ENCODE measurements at regions of chr7 and their contacts with region 1.

Region 1: DNA sequence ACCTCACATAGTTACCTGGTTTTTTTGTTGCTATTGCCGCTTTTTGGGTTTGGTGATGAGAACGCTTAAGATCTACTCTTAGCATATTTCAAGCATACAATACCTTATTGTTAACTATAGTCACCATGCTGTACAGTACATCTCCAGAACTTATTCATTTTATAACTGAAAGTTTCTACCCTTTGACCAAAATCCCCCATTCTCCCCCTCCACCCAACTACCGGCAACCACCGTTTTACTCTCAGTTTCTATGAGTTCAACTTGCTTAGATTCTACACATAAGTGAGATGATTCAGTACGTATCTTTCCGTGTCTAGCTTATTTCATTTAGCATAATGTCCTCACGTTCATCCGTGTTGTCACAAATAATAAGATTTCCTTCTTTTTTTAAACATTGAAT is 86.7 kb upstream of the IL6 start:
- DNase-seq: no peak
- ATAC-seq: peak; percentile 91
- H3K4me3 Mint-ChIP-seq: peak overlapping the region; percentile 55
- H3K27ac Mint-ChIP-seq: peak overlapping the region; percentile 75
- H3K4me1 Mint-ChIP-seq: peaks cover 30% of the 10 kb centered on the region
- H3K27me3 Mint-ChIP-seq: no peaks in the 10 kb centered on the region
- CTCF ChIP-seq: no peak

Region 2: GRCh38 chr7:22559829-22560489 is 80.3 kb before region 1 on chr7:
- CTCF ChIA-PET with region 1: interaction called, 4 read pairs
- POLR2A ChIA-PET with region 1: interaction called, 17 read pairs
- intact Hi-C with region 1: loop called (anchors 1 kb)
- DNase-seq: peak; percentile 43
- ATAC-seq: peak; percentile 80
- H3K4me3 Mint-ChIP-seq: peak overlapping the region; percentile 36
- H3K27ac Mint-ChIP-seq: peak overlapping the region; percentile 70
- H3K4me1 Mint-ChIP-seq: peaks cover 50% of the 10 kb centered on the region
- H3K27me3 Mint-ChIP-seq: no peaks in the 10 kb centered on the region
- CTCF ChIP-seq: peak; percentile 24

Region 3: DNA sequence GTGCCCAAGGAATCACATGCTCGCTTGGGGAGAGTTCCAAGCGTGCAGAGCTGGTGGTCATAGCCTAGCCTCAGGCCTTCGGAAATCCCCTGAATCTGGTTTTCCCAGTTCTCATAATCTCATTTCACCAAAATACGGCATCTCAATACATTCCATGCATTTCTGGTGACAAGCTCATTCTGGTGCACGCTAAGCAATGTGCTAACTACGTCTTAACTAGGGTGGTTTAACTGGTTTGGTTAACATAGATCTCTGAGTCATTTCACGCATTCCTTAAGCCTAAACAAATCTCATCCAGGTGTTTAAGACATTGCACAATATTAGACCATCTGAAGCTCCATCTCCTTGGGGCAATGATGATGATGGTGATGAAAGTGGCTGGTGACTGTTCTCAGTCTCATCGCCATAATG is 67.3 kb before region 1 on chr7:
- CTCF ChIA-PET with region 1: no interaction called
- POLR2A ChIA-PET with region 1: no interaction called
- intact Hi-C with region 1: no loop called
- DNase-seq: no peak
- ATAC-seq: no peak
- H3K4me3 Mint-ChIP-seq: no peak overlapping the region
- H3K27ac Mint-ChIP-seq: no peak overlapping the region
- H3K4me1 Mint-ChIP-seq: peaks cover 55% of the 10 kb centered on the region
- H3K27me3 Mint-ChIP-seq: no peaks in the 10 kb centered on the region
- CTCF ChIP-seq: no peak

Region 4: DNA sequence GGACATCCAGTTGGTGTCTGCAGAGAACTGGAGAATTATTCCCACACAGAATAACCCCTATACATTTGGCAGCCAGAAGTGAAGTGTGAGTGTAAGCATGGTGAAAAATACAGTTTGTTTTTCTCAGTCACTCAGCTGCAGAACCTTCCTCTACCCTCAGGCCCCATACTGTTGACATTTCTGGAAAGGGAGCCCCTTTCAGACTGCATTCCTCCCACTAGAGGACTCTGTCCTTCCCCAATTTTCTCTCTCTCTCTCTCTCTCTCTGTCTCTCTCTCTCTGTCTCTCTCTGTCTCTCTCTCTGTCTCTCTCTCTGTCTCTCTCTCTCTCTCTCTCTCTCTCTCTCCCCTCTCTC is 53.5 kb before region 1 on chr7:
- CTCF ChIA-PET with region 1: no interaction called
- POLR2A ChIA-PET with region 1: interaction called, 3 read pairs
- intact Hi-C with region 1: loop called (anchors 1 kb)
- DNase-seq: no peak
- ATAC-seq: no peak
- H3K4me3 Mint-ChIP-seq: peak overlapping the region; percentile 67
- H3K27ac Mint-ChIP-seq: peak overlapping the region; percentile 87
- H3K4me1 Mint-ChIP-seq: peaks cover 65% of the 10 kb centered on the region
- H3K27me3 Mint-ChIP-seq: no peaks in the 10 kb centered on the region
- CTCF ChIP-seq: no peak

Region 5: GRCh38 chr7:22601812-22602565 is 38.3 kb before region 1 on chr7:
- CTCF ChIA-PET with region 1: no interaction called
- POLR2A ChIA-PET with region 1: no interaction called
- intact Hi-C with region 1: no loop called
- DNase-seq: no peak
- ATAC-seq: no peak
- H3K4me3 Mint-ChIP-seq: no peak overlapping the region
- H3K27ac Mint-ChIP-seq: no peak overlapping the region
- H3K4me1 Mint-ChIP-seq: peaks cover 21% of the 10 kb centered on the region
- H3K27me3 Mint-ChIP-seq: no peaks in the 10 kb centered on the region
- CTCF ChIP-seq: no peak

Region 6: DNA sequence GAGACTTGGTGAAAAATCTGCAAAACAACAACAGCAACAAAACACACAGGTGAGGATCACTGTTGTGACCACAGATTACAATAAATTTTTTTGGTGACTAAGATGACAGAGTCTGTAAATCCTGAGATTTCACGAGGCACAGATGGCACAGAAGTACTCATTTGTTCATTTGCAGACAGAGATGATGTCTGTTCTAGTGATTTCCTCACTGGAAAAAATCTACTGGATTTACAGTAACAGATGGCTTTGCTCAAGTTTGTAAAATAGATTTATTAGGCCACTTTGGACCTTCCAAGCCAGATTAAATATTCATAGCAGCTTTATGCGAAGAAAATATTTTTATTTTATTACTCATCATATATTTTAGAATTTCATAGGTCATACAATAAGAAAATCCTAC is 26.8 kb before region 1 on chr7:
- CTCF ChIA-PET with region 1: no interaction called
- POLR2A ChIA-PET with region 1: interaction called, 10 read pairs
- intact Hi-C with region 1: no loop called
- DNase-seq: no peak
- ATAC-seq: no peak
- H3K4me3 Mint-ChIP-seq: no peak overlapping the region
- H3K27ac Mint-ChIP-seq: no peak overlapping the region
- H3K4me1 Mint-ChIP-seq: peaks cover 43% of the 10 kb centered on the region
- H3K27me3 Mint-ChIP-seq: no peaks in the 10 kb centered on the region
- CTCF ChIP-seq: no peak

Region 7: GRCh38 chr7:22627136-22627535 is 13.1 kb before region 1 on chr7:
- CTCF ChIA-PET with region 1: no interaction called
- POLR2A ChIA-PET with region 1: interaction called, 4 read pairs
- intact Hi-C with region 1: loop called (anchors 2 kb)
- DNase-seq: no peak
- ATAC-seq: no peak
- H3K4me3 Mint-ChIP-seq: no peak overlapping the region
- H3K27ac Mint-ChIP-seq: no peak overlapping the region
- H3K4me1 Mint-ChIP-seq: peaks cover 9% of the 10 kb centered on the region
- H3K27me3 Mint-ChIP-seq: no peaks in the 10 kb centered on the region
- CTCF ChIP-seq: no peak

Region 8: GRCh38 chr7:22686620-22687019 is 46.4 kb after region 1 on chr7:
- CTCF ChIA-PET with region 1: no interaction called
- POLR2A ChIA-PET with region 1: no interaction called
- intact Hi-C with region 1: no loop called
- DNase-seq: no peak
- ATAC-seq: no peak
- H3K4me3 Mint-ChIP-seq: no peak overlapping the region
- H3K27ac Mint-ChIP-seq: peak overlapping the region; percentile 27
- H3K4me1 Mint-ChIP-seq: peaks cover 79% of the 10 kb centered on the region
- H3K27me3 Mint-ChIP-seq: no peaks in the 10 kb centered on the region
- CTCF ChIP-seq: no peak

Region 9: GRCh38 chr7:22854158-22855048 is 214.1 kb after region 1 on chr7:
- CTCF ChIA-PET with region 1: no interaction called
- POLR2A ChIA-PET with region 1: no interaction called
- intact Hi-C with region 1: no loop called
- DNase-seq: peak; percentile 84
- ATAC-seq: peak; percentile 81
- H3K4me3 Mint-ChIP-seq: peak overlapping the region; percentile 96
- H3K27ac Mint-ChIP-seq: peak overlapping the region; percentile 91
- H3K4me1 Mint-ChIP-seq: peaks cover 54% of the 10 kb centered on the region
- H3K27me3 Mint-ChIP-seq: no peaks in the 10 kb centered on the region
- CTCF ChIP-seq: no peak

Measured in activated B cell treated with CpG ODN at 0.5 μM for 24 hours (primary cell).